ENCODE measurements at regions of chr6 and their contacts with region 1.

Region 1: GRCh38 chr6:158072083-158072721 is 90.5 kb downstream of the SYNJ2 start:
- DNase-seq: peak; percentile 56 to 59 (median 57)
- H3K4me3 ChIP-seq: no peak overlapping the region
- H3K4me3 Mint-ChIP-seq: no peak overlapping the region
- H3K27ac ChIP-seq: no peak overlapping the region
- H3K27ac Mint-ChIP-seq: peak overlapping the region in 5 of 7 donors; percentile 10 to 93 (median 87)
- H3K4me1 ChIP-seq: peaks cover 9% of the 10 kb centered on the region
- H3K4me1 Mint-ChIP-seq: peaks cover 9 to 25% (median 16%) of the 10 kb centered on the region in 4 donors
- H3K27me3 ChIP-seq: no peaks in the 10 kb centered on the region
- H3K27me3 Mint-ChIP-seq: no peaks in the 10 kb centered on the region

Region 2: DNA sequence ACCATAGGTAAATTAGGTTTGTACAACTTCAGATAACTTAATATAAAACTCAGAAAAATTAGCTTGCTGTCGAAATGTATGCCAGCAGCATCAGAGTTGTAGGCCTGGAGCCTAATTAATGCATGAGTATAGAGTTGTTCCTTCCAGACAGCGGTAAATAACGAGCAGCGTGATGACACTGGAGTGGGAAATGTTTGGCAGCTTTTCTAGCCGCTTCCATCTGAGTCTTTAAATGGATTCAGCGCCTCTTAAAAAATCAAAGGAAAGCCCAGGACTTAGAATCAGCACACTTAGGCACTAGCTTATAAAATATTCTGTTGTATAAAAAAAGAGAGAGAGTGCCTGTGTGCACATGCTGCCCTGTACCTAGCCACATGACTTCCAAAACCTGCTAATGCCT is 134.3 kb before region 1 on chr6:
- CTCF ChIA-PET with region 1: interaction called, 16 read pairs
- POLR2A ChIA-PET with region 1: no interaction called
- intact Hi-C with region 1: loop called (anchors 10 kb)
- DNase-seq: no peak
- H3K4me3 ChIP-seq: no peak overlapping the region
- H3K4me3 Mint-ChIP-seq: no peak overlapping the region
- H3K27ac ChIP-seq: no peak overlapping the region
- H3K27ac Mint-ChIP-seq: no peak overlapping the region
- H3K4me1 ChIP-seq: no peaks in the 10 kb centered on the region
- H3K4me1 Mint-ChIP-seq: peaks cover 0 to 5% (median 2%) of the 10 kb centered on the region in 4 donors
- H3K27me3 ChIP-seq: no peaks in the 10 kb centered on the region
- H3K27me3 Mint-ChIP-seq: no peaks in the 10 kb centered on the region

Region 3: DNA sequence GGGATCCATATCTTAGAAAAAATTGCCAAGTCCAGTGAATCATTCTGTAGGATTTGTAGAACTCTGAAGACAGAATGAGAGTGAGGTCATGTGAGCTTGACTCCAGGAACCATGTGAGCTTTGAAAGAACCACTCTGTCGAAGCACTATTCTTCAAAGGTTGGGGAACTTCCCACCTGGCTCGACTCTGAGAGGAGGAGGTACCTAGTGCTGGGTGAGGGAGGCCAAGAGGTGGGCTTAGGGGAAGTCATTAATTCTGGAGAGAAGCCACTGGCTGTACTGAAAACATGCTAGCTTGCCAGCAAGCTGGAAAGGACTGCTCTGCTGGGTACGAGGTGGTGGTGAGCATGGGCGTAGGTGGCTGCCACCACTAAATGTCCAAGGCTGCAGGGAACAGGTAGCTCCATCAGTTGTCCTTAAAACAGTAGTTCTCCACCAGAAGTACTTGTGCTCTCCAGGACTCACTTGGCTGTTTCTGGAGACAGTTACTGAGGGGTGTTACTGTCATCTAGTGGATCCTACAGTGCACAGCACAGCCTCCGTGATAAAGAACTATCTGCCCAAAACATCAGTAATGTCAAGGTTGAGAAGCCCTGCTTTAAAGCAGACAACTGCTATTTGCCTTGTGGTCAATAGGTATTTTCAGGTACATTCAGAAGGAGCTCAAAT is 125.2 kb before region 1 on chr6:
- CTCF ChIA-PET with region 1: interaction called, 6 read pairs
- POLR2A ChIA-PET with region 1: no interaction called
- intact Hi-C with region 1: loop called (anchors 10 kb)
- DNase-seq: peak in 2 of 5 donors; percentile 11 to 14
- H3K4me3 ChIP-seq: no peak overlapping the region
- H3K4me3 Mint-ChIP-seq: no peak overlapping the region
- H3K27ac ChIP-seq: no peak overlapping the region
- H3K27ac Mint-ChIP-seq: peak overlapping the region in 2 of 7 donors; percentile 48 to 71
- H3K4me1 ChIP-seq: no peaks in the 10 kb centered on the region
- H3K4me1 Mint-ChIP-seq: no peaks in the 10 kb centered on the region
- H3K27me3 ChIP-seq: no peaks in the 10 kb centered on the region
- H3K27me3 Mint-ChIP-seq: peaks cover 0 to 1% of the 10 kb centered on the region in 2 donors

Region 4: GRCh38 chr6:157981395-157982296 is 90.6 kb before region 1 on chr6 and contains the start of gene SYNJ2:
- CTCF ChIA-PET with region 1: interaction called, 33 read pairs
- POLR2A ChIA-PET with region 1: interaction called, 6 read pairs
- intact Hi-C with region 1: loop called (anchors 1 kb)
- DNase-seq: peak; percentile 86 to 89 (median 87)
- H3K4me3 ChIP-seq: peak within 1 kb of the TSS; percentile 76 to 88
- H3K4me3 Mint-ChIP-seq: peak within 1 kb of the TSS; percentile 88 to 94 (median 92)
- H3K27ac ChIP-seq: peak within 1 kb of the TSS; percentile 71
- H3K27ac Mint-ChIP-seq: peak within 1 kb of the TSS; percentile 85 to 93 (median 90)
- H3K4me1 ChIP-seq: peaks cover 44% of the 10 kb centered on the region
- H3K4me1 Mint-ChIP-seq: peaks cover 24 to 53% (median 39%) of the 10 kb centered on the region in 4 donors
- H3K27me3 ChIP-seq: no peaks in the 10 kb centered on the region
- H3K27me3 Mint-ChIP-seq: no peaks in the 10 kb centered on the region
- total RNA-seq, gene SYNJ2: 17.2 to 17.4 TPM

Region 5: DNA sequence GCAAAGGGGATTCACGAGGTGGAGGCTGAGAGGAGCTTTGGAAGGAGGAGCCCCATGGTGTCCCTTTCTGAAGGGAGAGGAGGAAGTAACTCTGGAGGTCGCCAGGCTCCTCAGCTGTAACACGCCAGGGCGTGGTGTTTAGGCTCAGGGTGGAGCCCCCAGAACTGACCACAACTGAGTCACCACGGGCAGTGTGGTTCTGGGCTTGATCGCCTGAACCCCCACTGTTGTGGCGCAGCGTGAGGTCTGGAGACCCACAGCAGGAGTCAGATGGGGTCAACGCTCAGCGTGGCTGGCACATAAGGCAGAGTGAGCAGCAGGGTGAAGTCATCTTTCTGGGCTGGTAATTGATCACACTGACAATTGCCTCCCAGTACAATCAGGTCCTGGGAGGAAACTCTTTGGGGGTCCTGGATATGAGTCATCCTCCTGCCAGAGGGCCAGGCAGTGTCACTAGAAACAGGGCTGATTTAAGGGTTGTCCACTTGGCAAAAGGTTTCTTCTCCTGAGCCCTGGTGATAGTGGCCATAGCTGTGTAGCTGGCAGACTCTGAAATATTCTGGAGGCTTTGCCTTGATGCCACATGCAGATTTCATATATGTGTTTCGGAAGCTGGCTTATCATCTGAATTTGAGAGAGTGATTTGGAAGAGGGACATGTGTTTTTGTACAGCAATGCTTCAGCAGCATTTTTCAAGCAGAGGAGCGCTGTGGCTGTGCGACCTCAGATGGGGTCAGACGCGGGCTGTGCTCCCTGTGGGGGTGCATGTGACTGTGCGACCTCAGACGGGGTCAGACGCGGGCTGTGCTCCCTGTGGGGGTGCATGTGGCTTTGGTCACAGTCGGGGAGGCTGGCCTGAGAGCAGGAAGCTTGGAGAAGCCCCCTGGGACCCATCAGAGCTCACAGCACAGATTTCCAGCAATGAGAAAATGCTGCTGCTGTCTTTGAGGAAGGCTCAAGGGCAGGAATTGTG is 40.5 kb before region 1 on chr6:
- CTCF ChIA-PET with region 1: interaction called, 54 read pairs
- POLR2A ChIA-PET with region 1: interaction called, 5 read pairs
- intact Hi-C with region 1: loop called (anchors 1 kb)
- DNase-seq: peak in 3 of 5 donors; percentile 7 to 14 (median 11)
- H3K4me3 ChIP-seq: no peak overlapping the region
- H3K4me3 Mint-ChIP-seq: peak overlapping the region in 4 of 8 donors; percentile 30 to 54 (median 46)
- H3K27ac ChIP-seq: no peak overlapping the region
- H3K27ac Mint-ChIP-seq: peak overlapping the region; percentile 80 to 93 (median 87)
- H3K4me1 ChIP-seq: peaks cover 35% of the 10 kb centered on the region
- H3K4me1 Mint-ChIP-seq: peaks cover 23 to 39% (median 29%) of the 10 kb centered on the region in 4 donors
- H3K27me3 ChIP-seq: no peaks in the 10 kb centered on the region
- H3K27me3 Mint-ChIP-seq: no peaks in the 10 kb centered on the region

Region 6: GRCh38 chr6:158060455-158061360 is 11.5 kb before region 1 on chr6:
- CTCF ChIA-PET with region 1: interaction called, 89 read pairs
- POLR2A ChIA-PET with region 1: interaction called, 4 read pairs
- intact Hi-C with region 1: no loop called
- DNase-seq: peak in 4 of 5 donors; percentile 11 to 30 (median 24)
- H3K4me3 ChIP-seq: no peak overlapping the region
- H3K4me3 Mint-ChIP-seq: peak overlapping the region in 4 of 8 donors; percentile 18 to 48 (median 31)
- H3K27ac ChIP-seq: peak overlapping the region; percentile 24
- H3K27ac Mint-ChIP-seq: peak overlapping the region; percentile 52 to 95 (median 81)
- H3K4me1 ChIP-seq: peaks cover 47% of the 10 kb centered on the region
- H3K4me1 Mint-ChIP-seq: peaks cover 12 to 39% (median 28%) of the 10 kb centered on the region in 4 donors
- H3K27me3 ChIP-seq: no peaks in the 10 kb centered on the region
- H3K27me3 Mint-ChIP-seq: no peaks in the 10 kb centered on the region